ENCODE measurements at regions of chr21 and their contacts with region 1.

Region 1: DNA sequence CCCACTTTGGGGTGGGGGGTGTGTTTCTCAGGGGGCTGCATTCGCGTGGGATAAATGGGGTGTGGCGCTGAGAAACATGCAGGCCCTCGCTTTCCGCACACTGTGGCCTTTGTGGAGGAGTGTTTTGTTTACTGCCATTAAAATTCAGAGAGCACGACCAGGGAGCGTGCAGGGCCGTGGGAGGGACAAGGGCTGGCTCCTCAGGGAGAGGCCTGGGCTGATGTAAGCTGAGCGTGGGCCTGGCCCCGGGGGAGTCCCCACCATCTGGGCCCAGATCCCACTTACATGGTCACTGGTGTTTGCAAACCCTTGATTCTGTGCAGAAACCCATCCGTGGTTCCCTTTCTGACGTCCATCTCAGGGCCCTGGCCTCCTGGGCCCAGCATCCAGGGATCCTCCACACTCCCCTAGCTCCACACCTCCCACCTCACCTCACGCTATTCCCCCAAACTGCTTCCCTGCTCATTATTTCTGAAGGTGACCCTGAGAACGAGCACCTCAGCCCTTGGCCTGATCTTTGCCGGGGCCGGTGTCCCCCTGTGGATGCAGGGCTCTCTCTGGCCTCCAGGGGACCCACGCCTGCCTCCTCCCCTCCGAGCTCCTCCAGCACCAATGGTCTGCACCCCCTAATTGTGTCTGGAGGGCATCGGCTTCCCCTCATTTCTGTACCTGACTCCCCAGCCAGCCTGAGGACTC is 92.5 kb upstream of the SIM2 start:
- DNase-seq: no peak
- H3K4me3 ChIP-seq: no peak overlapping the region
- H3K27ac ChIP-seq: no peak overlapping the region
- H3K4me1 ChIP-seq: no peaks in the 10 kb centered on the region; a peak in 1 of 7 replicates
- H3K27me3 ChIP-seq: no peaks in the 10 kb centered on the region
- CTCF ChIP-seq: peak; percentile 4 to 53 (median 52); a peak in 2 of 4 replicates
- EP300 ChIP-seq: no peak
- POLR2A ChIP-seq: no peak
- RAD21 ChIP-seq: no peak

Region 2: DNA sequence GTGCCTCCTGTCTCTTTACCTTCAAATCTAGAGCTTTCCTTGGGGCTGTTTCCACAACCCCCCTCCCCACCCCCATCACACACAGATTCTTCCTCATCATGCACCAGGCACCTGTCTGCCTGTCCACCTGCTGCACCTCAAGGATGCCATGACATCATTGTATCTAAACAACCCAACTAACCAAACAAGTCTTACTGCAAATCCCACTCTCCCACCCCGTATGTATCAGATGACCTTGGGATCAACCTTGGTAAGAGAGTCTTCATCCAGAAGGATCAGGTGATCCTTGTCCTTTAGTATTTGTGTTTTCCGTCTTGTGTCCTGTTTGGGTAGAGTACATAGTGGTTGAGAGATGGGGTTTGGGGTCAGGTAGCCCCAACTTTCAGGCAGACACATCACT is 10.2 kb before region 1 on chr21:
- CTCF ChIA-PET with region 1: interaction called, 21 read pairs
- POLR2A ChIA-PET with region 1: no interaction called
- DNase-seq: no peak
- H3K4me3 ChIP-seq: no peak overlapping the region
- H3K27ac ChIP-seq: no peak overlapping the region
- H3K4me1 ChIP-seq: no peaks in the 10 kb centered on the region; a peak in 1 of 7 replicates
- H3K27me3 ChIP-seq: no peaks in the 10 kb centered on the region
- CTCF ChIP-seq: no peak
- EP300 ChIP-seq: no peak
- POLR2A ChIP-seq: no peak
- RAD21 ChIP-seq: no peak

Region 3: DNA sequence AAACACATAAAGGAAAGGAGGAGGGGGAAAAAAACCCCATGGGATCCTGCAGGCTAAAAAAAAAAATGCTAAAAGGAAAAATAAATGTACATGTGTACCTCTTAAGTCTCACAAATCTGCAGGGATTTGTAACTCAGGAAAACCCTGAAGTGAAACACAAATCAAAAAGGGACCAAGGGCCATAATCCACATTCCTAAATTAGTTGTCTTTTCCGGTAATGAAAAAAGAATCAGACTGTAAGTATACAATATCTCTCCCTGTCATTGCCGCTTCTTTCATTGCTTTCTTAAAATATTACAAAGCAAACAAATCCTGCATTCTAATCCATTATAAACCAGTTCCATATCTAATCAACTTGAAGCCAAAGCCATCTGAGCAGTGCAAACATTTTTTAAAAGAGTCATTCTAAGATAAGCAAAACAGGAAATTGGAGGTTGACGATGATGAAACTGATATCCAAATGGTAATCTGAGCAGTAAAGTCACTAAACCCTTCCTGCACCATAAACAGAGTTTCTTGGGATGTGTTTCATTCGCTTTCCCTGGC is 33.8 kb after region 1 on chr21:
- CTCF ChIA-PET with region 1: interaction called, 10 read pairs
- POLR2A ChIA-PET with region 1: no interaction called
- DNase-seq: no peak
- H3K4me3 ChIP-seq: no peak overlapping the region
- H3K27ac ChIP-seq: no peak overlapping the region
- H3K4me1 ChIP-seq: no peaks in the 10 kb centered on the region
- H3K27me3 ChIP-seq: no peaks in the 10 kb centered on the region; a peak in 1 of 7 replicates
- CTCF ChIP-seq: no peak
- EP300 ChIP-seq: no peak
- POLR2A ChIP-seq: no peak
- RAD21 ChIP-seq: no peak